A673 (cell line): ENCODE measurements at regions of chr2 and their contacts with region 1.

Region 1: DNA sequence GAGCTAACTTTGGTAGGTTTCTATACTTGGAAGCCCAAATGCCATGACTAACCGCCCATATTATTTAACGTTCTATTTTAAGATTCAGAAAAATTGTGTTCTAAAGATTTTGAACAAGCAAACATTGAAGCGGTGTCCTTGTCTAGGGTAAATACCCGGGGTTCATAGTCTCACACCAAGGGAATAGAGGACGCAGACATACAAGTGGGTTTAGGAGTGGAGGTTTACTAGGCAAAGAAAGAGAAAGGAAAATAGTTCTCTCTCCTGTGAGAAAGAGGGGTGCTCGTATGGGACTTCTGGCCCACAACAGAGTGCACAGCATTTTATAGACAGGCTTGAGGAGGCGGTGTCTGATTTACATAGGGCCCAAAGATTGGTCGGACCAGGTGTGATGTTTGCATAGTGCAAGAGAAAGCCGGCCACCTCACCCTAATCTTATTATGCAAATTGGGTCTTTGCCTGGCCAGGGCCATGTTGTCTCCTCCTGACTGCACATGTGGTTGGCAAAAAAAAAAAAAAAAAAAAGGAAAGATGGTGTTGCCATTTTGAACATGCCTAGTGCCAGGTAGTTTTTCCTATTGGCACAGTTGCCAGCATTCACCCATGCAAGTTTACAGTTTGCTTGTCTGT is 1062.6 kb downstream of the LRP1B start:
- DNase-seq: peak; percentile 12
- H3K4me3 ChIP-seq: no peak overlapping the region
- H3K27ac ChIP-seq: no peak overlapping the region
- H3K4me1 ChIP-seq: no peaks in the 10 kb centered on the region
- H3K27me3 ChIP-seq: no peaks in the 10 kb centered on the region
- CTCF ChIP-seq: no peak

Region 2: GRCh38 chr2:140164449-140164848 is 903.7 kb before region 1 on chr2:
- CTCF ChIA-PET with region 1: no interaction called
- POLR2A ChIA-PET with region 1: no interaction called
- intact Hi-C with region 1: no loop called
- DNase-seq: no peak
- H3K4me3 ChIP-seq: no peak overlapping the region
- H3K27ac ChIP-seq: no peak overlapping the region
- H3K4me1 ChIP-seq: no peaks in the 10 kb centered on the region
- H3K27me3 ChIP-seq: no peaks in the 10 kb centered on the region
- CTCF ChIP-seq: peak; percentile 29; the same call in 1 of the 2 replicates

Region 3: DNA sequence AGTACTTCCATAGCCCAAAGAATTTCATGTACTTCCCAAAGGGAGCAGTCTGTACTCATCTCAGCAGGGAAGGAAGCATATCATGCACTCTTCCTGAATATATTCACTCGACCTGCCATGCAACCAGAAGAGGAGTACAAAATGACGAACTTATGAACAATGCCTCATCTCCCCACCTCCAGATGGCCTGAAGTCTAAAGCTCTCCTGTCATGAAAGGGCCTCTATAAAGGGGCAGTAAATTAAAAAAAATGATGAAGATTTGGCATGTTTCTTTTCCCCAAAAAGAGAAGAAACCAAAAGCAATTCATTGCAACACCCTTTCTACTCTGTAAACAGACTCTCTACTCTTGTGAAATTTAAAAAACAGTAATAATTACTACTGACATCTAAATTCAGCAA is 538.5 kb before region 1 on chr2:
- CTCF ChIA-PET with region 1: interaction called, 10 read pairs
- POLR2A ChIA-PET with region 1: no interaction called
- intact Hi-C with region 1: no loop called
- DNase-seq: no peak
- H3K4me3 ChIP-seq: no peak overlapping the region
- H3K27ac ChIP-seq: no peak overlapping the region
- H3K4me1 ChIP-seq: no peaks in the 10 kb centered on the region
- H3K27me3 ChIP-seq: no peaks in the 10 kb centered on the region
- CTCF ChIP-seq: no peak